ENCODE measurements at regions of chr2 and their contacts with region 1.

Region 1: GRCh38 chr2:207143215-207144172 is 22.3 kb downstream of the KLF7 start:
- DNase-seq: peak; percentile 65
- ATAC-seq: peak; percentile 78
- H3K4me3 Mint-ChIP-seq: peak overlapping the region; percentile 72
- H3K27ac Mint-ChIP-seq: peak overlapping the region; percentile 90
- H3K4me1 Mint-ChIP-seq: peaks cover 39% of the 10 kb centered on the region
- H3K27me3 Mint-ChIP-seq: no peaks in the 10 kb centered on the region

Region 2: GRCh38 chr2:207073801-207074678 is 69.5 kb before region 1 on chr2:
- POLR2A ChIA-PET with region 1: interaction called, 19 read pairs
- DNase-seq: peak; percentile 41
- ATAC-seq: peak; percentile 93
- H3K4me3 Mint-ChIP-seq: peak overlapping the region; percentile 79
- H3K27ac Mint-ChIP-seq: peak overlapping the region; percentile 87
- H3K4me1 Mint-ChIP-seq: peaks cover 33% of the 10 kb centered on the region
- H3K27me3 Mint-ChIP-seq: no peaks in the 10 kb centered on the region

Region 3: DNA sequence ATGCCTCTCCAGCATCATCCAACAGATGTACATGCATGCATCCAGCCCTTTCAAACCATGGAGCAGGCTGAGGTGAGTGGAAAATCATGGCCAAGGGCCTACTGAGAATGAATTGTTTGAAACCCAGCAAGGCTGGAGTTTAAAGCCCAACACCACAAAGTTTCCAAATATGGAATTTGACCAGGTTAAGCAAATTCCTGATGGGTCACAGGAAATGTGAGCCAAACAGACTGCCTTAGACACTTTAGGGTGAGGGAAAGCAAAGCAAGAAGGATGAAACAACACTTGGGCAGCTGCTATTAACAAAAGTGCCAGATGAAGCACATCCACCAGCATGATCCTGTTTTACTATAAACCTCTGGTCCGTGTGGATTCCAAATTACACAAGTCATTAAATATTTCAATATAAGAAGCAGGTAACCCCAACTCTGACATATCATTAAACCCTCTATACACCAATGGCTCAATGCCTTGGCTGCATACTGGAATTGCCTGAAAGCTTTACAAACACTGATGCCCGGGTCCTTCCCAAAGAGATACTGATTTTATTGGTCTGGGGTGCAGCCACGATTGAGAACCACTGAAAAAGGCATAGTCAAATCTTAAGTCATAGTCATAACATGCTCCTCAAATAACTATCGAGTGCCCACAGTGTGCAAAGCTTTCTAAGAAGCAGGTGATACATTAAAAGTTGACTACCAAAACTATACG is 13.1 kb after region 1 on chr2:
- POLR2A ChIA-PET with region 1: interaction called, 24 read pairs
- DNase-seq: no peak
- ATAC-seq: peak; percentile 16
- H3K4me3 Mint-ChIP-seq: peak overlapping the region; percentile 51
- H3K27ac Mint-ChIP-seq: no peak overlapping the region
- H3K4me1 Mint-ChIP-seq: peaks cover 46% of the 10 kb centered on the region
- H3K27me3 Mint-ChIP-seq: no peaks in the 10 kb centered on the region

Region 4: DNA sequence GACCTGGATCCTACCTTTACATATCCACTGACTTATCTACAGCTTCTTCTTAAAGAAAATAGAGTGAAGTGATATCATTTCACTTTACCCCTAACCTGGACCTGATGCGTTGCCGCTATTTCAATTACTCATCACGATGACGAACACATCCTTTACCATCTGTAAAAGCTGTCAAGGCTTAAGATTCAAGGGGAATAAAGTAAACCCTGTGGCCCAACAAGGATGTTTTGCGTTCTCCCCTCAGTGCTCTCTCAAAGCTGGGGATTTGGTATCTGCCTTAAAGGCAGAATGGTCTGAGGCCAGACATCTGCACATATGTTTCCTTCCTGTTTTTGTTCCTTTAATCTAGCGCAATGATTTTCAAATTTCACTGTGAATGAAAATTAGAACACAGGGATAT is 122.4 kb after region 1 on chr2:
- POLR2A ChIA-PET with region 1: no interaction called
- DNase-seq: no peak
- ATAC-seq: no peak
- H3K4me3 Mint-ChIP-seq: no peak overlapping the region
- H3K27ac Mint-ChIP-seq: no peak overlapping the region
- H3K4me1 Mint-ChIP-seq: no peaks in the 10 kb centered on the region
- H3K27me3 Mint-ChIP-seq: no peaks in the 10 kb centered on the region